ENCODE measurements at regions of chr17 and their contacts with region 1.

Region 1: DNA sequence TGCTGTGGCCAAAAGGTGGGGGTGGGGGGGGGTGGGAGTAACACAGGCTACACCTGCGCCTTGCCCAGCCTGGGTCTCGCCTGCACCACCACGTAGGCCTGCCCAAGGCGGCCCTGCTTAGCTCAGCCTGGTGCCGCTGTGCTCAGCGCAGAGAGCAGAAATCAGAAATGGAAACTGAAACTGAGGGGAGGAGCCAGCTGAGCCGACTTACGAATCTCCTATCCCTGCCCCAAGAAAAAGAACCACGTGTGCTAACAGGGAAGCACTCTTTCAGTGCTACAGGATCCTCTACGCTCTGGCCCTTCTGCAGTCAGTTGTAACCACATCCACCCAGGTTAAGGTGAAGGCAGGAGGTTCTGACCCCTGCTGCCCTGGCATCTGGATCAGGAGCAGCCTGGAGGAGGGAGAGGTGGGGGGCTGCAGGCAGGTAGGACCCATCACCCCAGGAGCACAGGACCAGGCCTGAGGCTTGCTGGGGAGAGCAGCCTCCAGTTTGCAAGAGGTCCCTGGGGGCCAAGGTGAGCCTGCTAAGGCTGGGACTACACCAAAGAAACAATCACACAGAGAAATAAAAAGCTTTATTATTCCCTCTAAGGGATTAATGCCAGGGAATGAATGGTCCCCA is at the start of gene DHX58:
- DNase-seq: peak; percentile 47
- H3K4me3 ChIP-seq: peak within 1 kb of the TSS; percentile 47
- H3K27me3 ChIP-seq: no peaks in the 10 kb centered on the region
- CTCF ChIP-seq: no peak
- polyA plus RNA-seq, gene DHX58: 11.6 and 18.0 TPM in 2 replicates

Region 2: DNA sequence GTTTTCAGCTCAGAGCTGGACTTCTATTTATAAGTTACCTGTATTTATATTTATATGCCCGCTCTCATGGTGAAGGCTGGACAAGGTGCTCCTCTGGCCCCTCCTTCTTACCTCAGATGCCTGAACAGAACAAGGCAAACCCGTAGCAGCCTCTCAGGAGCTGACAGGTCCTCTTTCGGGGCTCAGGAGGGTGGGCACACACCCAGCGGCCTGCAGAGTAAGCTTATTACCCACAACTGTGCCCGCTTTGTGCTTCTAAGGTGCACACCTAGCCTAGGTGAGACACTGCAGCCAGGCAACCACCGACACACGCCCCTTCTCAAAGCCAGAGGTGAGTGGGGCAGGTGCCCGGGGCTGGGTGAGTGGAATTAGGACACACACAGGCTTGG is 87.5 kb before region 1 on chr17:
- CTCF ChIA-PET with region 1: interaction called, 61 read pairs
- POLR2A ChIA-PET with region 1: no interaction called
- DNase-seq: no peak
- H3K4me3 ChIP-seq: no peak overlapping the region
- H3K27me3 ChIP-seq: no peaks in the 10 kb centered on the region
- CTCF ChIP-seq: no peak

Region 3: GRCh38 chr17:42101513-42102319 is 10.9 kb before region 1 on chr17:
- CTCF ChIA-PET with region 1: interaction called, 32 read pairs
- POLR2A ChIA-PET with region 1: no interaction called
- DNase-seq: no peak
- H3K4me3 ChIP-seq: no peak overlapping the region
- H3K27me3 ChIP-seq: peaks cover 12% of the 10 kb centered on the region
- CTCF ChIP-seq: peak; percentile 87

Region 4: DNA sequence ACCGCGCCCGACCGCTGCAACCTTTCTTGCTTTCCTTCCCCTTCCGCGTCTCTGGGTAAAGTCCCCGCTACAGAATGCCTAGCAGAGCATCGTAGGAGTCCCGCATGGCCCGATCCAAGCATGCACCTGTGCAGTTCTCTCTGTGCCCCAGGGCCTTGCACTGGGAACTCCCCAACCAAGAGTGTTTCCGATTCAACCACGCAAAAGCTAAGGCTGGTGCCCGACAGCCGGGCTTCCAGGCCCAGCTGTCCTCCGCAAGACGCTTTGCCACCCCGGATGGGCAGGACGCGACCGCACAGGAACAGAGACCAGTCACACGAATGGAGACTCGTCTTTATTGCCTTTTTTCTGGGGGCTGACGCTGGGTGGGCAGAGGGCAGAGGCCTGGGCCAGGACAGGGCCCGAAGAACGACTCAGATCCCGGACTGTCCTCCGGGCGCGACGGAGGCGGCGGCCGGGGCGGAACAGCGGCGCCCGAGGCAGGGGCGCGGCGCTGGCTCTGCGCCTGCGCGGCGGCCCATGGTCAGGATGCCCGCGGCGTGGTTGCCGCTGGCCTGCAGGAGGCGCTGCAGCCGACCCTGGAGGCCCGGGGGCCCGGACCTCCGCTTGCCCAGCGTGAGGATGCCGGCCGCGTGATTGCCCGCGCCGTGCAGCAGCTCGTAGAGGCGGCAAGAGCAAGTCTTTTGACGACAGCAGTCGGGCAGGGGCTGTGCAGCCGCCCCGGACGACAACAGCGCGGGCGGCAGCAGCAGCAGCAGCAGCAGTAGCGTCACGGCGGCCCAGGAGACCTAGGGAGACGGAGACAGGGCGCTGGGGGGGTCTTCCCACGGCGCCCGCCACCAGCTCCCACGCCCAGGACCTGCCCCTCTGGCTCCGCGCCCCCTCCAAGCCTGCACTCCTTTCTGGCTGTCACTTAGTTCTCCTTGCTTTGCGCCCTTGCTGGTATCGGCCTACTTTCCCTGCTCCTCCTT is 71.4 kb after region 1 on chr17:
- CTCF ChIA-PET with region 1: interaction called, 32 read pairs
- POLR2A ChIA-PET with region 1: no interaction called
- DNase-seq: no peak
- H3K4me3 ChIP-seq: peak overlapping the region; percentile 46
- H3K27me3 ChIP-seq: peaks cover 21% of the 10 kb centered on the region
- CTCF ChIP-seq: peak; percentile 59

Region 5: GRCh38 chr17:42221937-42222745 is 109.5 kb after region 1 on chr17:
- CTCF ChIA-PET with region 1: no interaction called
- POLR2A ChIA-PET with region 1: no interaction called
- DNase-seq: no peak
- H3K4me3 ChIP-seq: no peak overlapping the region
- H3K27me3 ChIP-seq: no peaks in the 10 kb centered on the region
- CTCF ChIP-seq: peak; percentile 77

Measured in BJ (cell line).